ENCODE measurements at regions of chr4 and their contacts with region 1.

Region 1: DNA sequence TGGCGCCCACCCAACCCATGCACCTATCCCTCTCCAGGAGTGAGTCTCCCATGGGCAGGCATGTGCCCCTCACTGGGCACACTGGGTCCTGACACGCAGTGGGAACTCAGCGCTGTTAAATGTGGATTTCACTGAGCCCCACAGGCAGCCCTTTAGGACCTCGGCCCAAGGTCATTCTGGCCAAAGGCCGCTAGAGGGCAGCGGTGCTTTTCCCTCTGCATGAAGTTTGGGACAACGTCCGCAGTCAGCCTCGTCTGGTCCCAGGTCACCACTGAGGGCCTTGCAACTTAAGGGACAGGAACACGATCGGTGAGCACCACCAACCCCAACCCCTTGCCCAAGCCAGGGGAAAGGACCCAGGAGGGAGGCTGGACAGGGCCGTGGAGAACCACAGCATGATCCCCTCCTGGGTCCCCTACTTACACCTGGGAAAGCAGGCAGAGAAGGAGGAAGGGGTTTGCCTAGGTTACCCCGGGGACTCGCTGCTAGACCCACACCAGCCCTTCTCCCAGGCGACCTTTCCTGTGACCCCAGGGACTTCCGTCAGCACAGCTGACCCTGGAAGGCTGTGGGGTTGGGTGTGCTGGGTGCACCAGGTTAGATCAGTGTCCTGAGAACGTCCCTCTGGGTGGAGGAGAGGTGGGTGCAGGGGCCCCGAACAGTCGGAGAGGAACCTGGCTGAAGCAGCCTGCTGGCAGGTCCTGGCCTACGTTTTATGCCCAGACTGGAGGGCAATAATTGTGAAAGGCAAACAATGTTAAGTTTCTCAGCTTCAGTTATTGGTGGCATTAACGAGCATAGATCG is 24.0 kb downstream of the CYTL1 start:
- DNase-seq: peak; percentile 74
- H3K4me3 ChIP-seq: no peak overlapping the region
- H3K27ac ChIP-seq: no peak overlapping the region
- H3K4me1 ChIP-seq: no peaks in the 10 kb centered on the region
- CTCF ChIP-seq: peak; percentile 89

Region 2: GRCh38 chr4:4901877-4902276 is 93.4 kb before region 1 on chr4:
- CTCF ChIA-PET with region 1: no interaction called
- POLR2A ChIA-PET with region 1: no interaction called
- intact Hi-C with region 1: loop called (anchors 5 kb)
- DNase-seq: peak; percentile 57
- H3K4me3 ChIP-seq: no peak overlapping the region
- H3K27ac ChIP-seq: no peak overlapping the region
- H3K4me1 ChIP-seq: no peaks in the 10 kb centered on the region
- CTCF ChIP-seq: peak; percentile 74

Region 3: DNA sequence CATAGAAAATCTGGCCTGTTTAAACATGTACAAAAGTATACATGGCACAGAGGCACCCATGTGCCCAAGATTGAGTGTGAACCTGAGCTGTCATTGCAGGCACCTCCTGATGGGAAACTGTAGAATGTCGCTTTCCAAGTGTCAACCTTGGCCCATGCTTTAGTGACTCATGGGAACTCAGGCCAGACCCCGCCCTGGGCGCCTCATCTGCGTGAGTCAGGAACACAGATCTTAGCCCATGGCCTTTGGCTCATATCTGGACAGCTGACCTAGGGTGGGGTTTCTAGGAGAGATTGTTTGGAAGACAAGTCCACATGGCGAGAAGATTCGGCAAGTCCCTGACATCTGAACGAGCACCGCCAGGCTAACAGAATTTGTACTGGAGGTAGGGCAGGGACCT is 26.0 kb before region 1 on chr4:
- CTCF ChIA-PET with region 1: no interaction called
- POLR2A ChIA-PET with region 1: no interaction called
- intact Hi-C with region 1: no loop called
- DNase-seq: no peak
- H3K4me3 ChIP-seq: no peak overlapping the region
- H3K27ac ChIP-seq: no peak overlapping the region
- H3K4me1 ChIP-seq: no peaks in the 10 kb centered on the region
- CTCF ChIP-seq: no peak

Region 4: GRCh38 chr4:5019274-5019673 is 24.0 kb after region 1 on chr4 and contains the start of gene CYTL1:
- CTCF ChIA-PET with region 1: no interaction called
- POLR2A ChIA-PET with region 1: no interaction called
- intact Hi-C with region 1: no loop called
- DNase-seq: no peak
- H3K4me3 ChIP-seq: no peak within 1 kb of the TSS
- H3K27ac ChIP-seq: no peak within 1 kb of the TSS
- H3K4me1 ChIP-seq: no peaks in the 10 kb centered on the region
- CTCF ChIP-seq: no peak
- total RNA-seq, gene CYTL1: not detected in 2 replicates

Region 5: GRCh38 chr4:5142726-5143125 is 147.4 kb after region 1 on chr4:
- CTCF ChIA-PET with region 1: no interaction called
- POLR2A ChIA-PET with region 1: no interaction called
- intact Hi-C with region 1: loop called (anchors 10 kb)
- DNase-seq: peak; percentile 16
- H3K4me3 ChIP-seq: no peak overlapping the region
- H3K27ac ChIP-seq: no peak overlapping the region
- H3K4me1 ChIP-seq: no peaks in the 10 kb centered on the region
- CTCF ChIP-seq: peak; percentile 66

Region 6: DNA sequence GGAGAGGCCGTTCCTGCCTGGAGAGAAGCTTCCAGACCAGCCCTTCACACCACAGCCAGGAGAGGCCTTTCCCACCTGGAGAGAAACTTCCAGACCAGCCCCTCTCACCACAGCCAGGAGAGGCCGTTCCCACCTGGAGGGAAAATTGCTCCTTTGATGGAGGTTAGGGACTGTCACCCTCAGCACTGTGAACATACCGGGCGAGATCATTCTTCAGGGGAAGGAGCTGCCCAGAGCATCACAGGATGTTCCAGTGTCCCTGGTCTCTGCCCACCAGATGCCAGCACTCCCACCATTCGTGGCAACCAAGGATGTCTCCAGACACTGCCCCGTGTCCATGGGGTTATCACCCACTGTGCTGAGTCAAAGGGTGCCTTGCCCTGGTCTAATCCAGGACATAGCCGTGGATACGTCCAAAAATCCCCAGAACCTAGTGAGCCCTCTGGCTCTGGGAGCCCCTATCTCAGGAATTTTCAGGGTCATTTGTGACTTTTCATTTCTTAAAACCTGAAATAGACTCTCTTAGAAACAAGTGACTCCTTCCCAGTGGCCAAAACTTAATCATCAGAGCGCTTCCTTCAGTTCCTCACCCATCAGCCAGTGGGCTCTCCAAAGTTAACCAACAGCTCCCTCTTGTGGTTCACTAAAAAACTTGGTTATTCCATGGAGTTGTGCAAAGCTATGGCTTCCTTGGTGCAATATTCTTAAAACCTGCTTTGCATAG is 817.4 kb after region 1 on chr4:
- CTCF ChIA-PET with region 1: no interaction called
- POLR2A ChIA-PET with region 1: no interaction called
- intact Hi-C with region 1: loop called (anchors 10 kb)
- DNase-seq: peak; percentile 71
- H3K4me3 ChIP-seq: no peak overlapping the region
- H3K27ac ChIP-seq: no peak overlapping the region
- H3K4me1 ChIP-seq: no peaks in the 10 kb centered on the region
- CTCF ChIP-seq: peak; percentile 84

Measured in OCI-LY7 (cell line).